HCT116 (cell line): ENCODE measurements at regions of chr17 and their contacts with region 1.

Region 1: GRCh38 chr17:43946069-43946696 is 3.9 kb upstream of the PPY start:
- DNase-seq: no peak
- ATAC-seq: peak; percentile 44; the same call in 1 of the 2 replicates
- H3K4me3 ChIP-seq: no peak overlapping the region
- H3K27ac ChIP-seq: no peak overlapping the region
- H3K4me1 ChIP-seq: peaks cover 2 to 20% of the 10 kb centered on the region in 2 experiments; a peak in 3 of 4 replicates
- H3K27me3 ChIP-seq: no peaks in the 10 kb centered on the region
- CTCF ChIP-seq: peak in 1 of 3 experiments; percentile 8; a peak in 1 of 6 replicates
- POLR2A ChIP-seq: no peak
- RAD21 ChIP-seq: peak; percentile 21; the same call in 1 of the 2 replicates

Region 2: GRCh38 chr17:43814714-43815113 is 131.5 kb before region 1 on chr17:
- CTCF ChIA-PET with region 1: no interaction called
- POLR2A ChIA-PET with region 1: no interaction called
- RAD21 ChIA-PET with region 1: no interaction called
- intact Hi-C with region 1: no loop called
- DNase-seq: no peak
- ATAC-seq: no peak
- H3K4me3 ChIP-seq: no peak overlapping the region
- H3K27ac ChIP-seq: no peak overlapping the region
- H3K4me1 ChIP-seq: peaks cover 0 to 9% of the 10 kb centered on the region in 2 experiments; a peak in 1 of 4 replicates
- H3K27me3 ChIP-seq: no peaks in the 10 kb centered on the region
- CTCF ChIP-seq: no peak
- POLR2A ChIP-seq: no peak
- RAD21 ChIP-seq: no peak

Region 3: DNA sequence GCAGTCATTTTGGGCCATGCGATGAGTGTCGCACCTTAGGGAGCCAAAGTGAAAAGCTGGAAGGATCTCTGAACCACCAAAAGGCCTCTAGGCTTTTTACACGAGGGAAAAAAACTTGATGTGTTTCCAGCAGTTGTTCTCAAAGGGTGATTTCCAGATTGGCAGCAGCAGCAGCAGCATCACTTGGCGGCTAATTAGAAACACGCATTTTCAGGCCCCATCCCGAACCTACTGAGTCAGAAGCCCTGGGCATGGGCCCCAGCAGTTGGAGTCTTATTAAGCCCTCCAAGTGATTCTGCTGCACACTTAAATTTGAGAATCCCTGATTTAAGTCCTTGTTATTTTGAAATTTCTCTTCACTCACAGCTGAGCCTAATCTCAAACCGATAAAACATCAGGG is 32.8 kb after region 1 on chr17:
- CTCF ChIA-PET with region 1: no interaction called
- POLR2A ChIA-PET with region 1: no interaction called
- RAD21 ChIA-PET with region 1: no interaction called
- intact Hi-C with region 1: no loop called
- DNase-seq: no peak
- ATAC-seq: no peak
- H3K4me3 ChIP-seq: no peak overlapping the region
- H3K27ac ChIP-seq: no peak overlapping the region
- H3K4me1 ChIP-seq: no peaks in the 10 kb centered on the region
- H3K27me3 ChIP-seq: no peaks in the 10 kb centered on the region
- CTCF ChIP-seq: no peak
- POLR2A ChIP-seq: no peak
- RAD21 ChIP-seq: no peak

Region 4: GRCh38 chr17:43994272-43995149 is 48.3 kb after region 1 on chr17:
- CTCF ChIA-PET with region 1: interaction called, 21 read pairs
- POLR2A ChIA-PET with region 1: no interaction called
- RAD21 ChIA-PET with region 1: interaction called, 6 to 9 read pairs
- intact Hi-C with region 1: loop called (anchors 1 kb)
- DNase-seq: no peak
- ATAC-seq: peak; percentile 93
- H3K4me3 ChIP-seq: no peak overlapping the region
- H3K27ac ChIP-seq: no peak overlapping the region
- H3K4me1 ChIP-seq: peaks cover 0 to 16% of the 10 kb centered on the region in 2 experiments; a peak in 2 of 4 replicates
- H3K27me3 ChIP-seq: no peaks in the 10 kb centered on the region
- CTCF ChIP-seq: peak; percentile 79 to 95 (median 85)
- POLR2A ChIP-seq: no peak
- RAD21 ChIP-seq: peak; percentile 94

Region 5: GRCh38 chr17:44044067-44044466 is 97.9 kb after region 1 on chr17:
- CTCF ChIA-PET with region 1: interaction called, 40 read pairs
- POLR2A ChIA-PET with region 1: no interaction called
- RAD21 ChIA-PET with region 1: interaction called, 3 to 6 read pairs
- intact Hi-C with region 1: loop called (anchors 1 kb)
- DNase-seq: no peak
- ATAC-seq: no peak
- H3K4me3 ChIP-seq: no peak overlapping the region
- H3K27ac ChIP-seq: no peak overlapping the region
- H3K4me1 ChIP-seq: no peaks in the 10 kb centered on the region
- H3K27me3 ChIP-seq: no peaks in the 10 kb centered on the region
- CTCF ChIP-seq: no peak
- POLR2A ChIP-seq: no peak
- RAD21 ChIP-seq: no peak